Left ventricle myocardium inferior (tissue), 1 donor: ENCODE measurements at regions of chr17 and their contacts with region 1.

Region 1: DNA sequence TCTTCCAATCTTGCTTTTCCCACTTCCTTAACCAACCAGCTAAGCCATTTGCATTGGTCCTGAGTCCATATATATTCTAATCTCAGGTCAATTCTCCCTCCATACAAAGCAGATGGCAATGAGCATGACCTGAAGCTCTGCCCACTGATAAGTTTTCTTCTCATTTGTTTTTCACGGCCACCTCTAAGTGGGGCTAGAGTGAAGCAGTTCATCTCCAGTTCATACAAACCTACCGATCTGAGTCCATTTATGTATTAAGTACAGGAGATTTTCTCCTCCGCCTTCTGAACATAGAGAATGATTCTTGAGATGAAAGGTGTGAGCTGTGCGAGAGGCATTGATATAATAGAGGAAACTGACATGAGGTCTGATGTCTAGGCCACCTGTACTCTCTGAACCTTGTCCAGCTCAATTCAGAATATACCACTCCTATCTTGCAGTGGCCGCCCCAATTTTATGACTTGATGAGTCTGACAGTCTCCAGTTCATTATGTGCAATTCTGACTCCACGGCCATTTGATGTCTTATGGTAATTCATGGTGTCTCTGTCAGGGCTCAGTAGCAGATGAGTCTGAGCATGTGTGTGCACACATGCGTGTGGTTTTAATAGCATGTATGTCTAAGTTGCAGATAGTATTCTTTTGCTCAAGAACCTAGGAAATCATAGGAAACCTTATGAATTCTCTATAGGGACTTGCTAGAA is 329.8 kb downstream of the PMP22 start:
- DNase-seq: no peak
- H3K4me3 ChIP-seq: no peak overlapping the region
- H3K27ac ChIP-seq: no peak overlapping the region
- H3K4me1 ChIP-seq: no peaks in the 10 kb centered on the region
- H3K27me3 ChIP-seq: no peaks in the 10 kb centered on the region
- CTCF ChIP-seq: peak; percentile 30

Region 2: DNA sequence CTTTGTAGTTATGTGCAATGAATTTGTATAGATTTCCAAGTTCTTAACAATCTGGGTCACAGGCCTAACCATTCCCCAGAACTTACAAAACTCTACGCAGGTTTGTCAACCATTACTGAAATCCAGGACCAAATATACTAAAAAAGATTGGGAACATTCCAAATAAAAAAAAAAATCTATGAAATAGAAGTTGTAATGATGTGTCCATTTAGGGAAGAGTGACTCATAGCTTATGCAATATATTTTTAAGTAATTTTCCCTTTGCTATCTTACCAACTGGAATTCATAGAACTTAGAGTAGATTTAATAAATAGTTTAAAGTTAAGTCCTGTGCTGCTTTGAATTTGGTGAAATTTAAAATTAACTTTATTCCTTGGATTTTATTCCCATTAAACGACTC is 63.4 kb before region 1 on chr17:
- intact Hi-C with region 1: no loop called
- DNase-seq: no peak
- H3K4me3 ChIP-seq: no peak overlapping the region
- H3K27ac ChIP-seq: no peak overlapping the region
- H3K4me1 ChIP-seq: no peaks in the 10 kb centered on the region
- H3K27me3 ChIP-seq: no peaks in the 10 kb centered on the region
- CTCF ChIP-seq: no peak

Region 3: DNA sequence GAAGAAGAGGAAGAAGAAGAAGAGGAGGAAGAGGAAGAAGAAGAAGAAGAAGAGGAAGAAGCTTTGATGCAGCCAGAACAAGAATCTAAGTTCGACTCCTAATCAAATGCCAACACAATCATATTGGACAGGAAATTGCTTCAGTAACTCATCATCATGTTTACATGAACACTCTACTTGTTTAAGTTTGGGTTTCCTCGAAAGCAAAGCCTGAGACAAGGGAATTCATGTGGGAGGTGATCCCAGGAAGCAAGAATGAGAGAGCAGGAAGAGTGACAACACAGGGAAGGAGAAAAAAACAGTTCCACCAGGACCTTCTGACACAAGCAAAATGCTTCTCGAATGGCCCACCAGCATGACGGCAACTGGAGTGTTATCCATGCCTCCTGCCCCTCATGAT is 50.8 kb after region 1 on chr17:
- intact Hi-C with region 1: no loop called
- DNase-seq: no peak
- H3K4me3 ChIP-seq: no peak overlapping the region
- H3K27ac ChIP-seq: no peak overlapping the region
- H3K4me1 ChIP-seq: no peaks in the 10 kb centered on the region
- H3K27me3 ChIP-seq: peaks cover 18% of the 10 kb centered on the region
- CTCF ChIP-seq: no peak

Region 4: GRCh38 chr17:14997290-14997689 is 62.0 kb after region 1 on chr17:
- intact Hi-C with region 1: no loop called
- DNase-seq: no peak
- H3K4me3 ChIP-seq: no peak overlapping the region
- H3K27ac ChIP-seq: no peak overlapping the region
- H3K4me1 ChIP-seq: no peaks in the 10 kb centered on the region
- H3K27me3 ChIP-seq: no peaks in the 10 kb centered on the region
- CTCF ChIP-seq: no peak

Region 5: GRCh38 chr17:15038656-15039055 is 103.4 kb after region 1 on chr17:
- intact Hi-C with region 1: no loop called
- DNase-seq: no peak
- H3K4me3 ChIP-seq: no peak overlapping the region
- H3K27ac ChIP-seq: no peak overlapping the region
- H3K4me1 ChIP-seq: no peaks in the 10 kb centered on the region
- H3K27me3 ChIP-seq: no peaks in the 10 kb centered on the region
- CTCF ChIP-seq: no peak

Region 6: DNA sequence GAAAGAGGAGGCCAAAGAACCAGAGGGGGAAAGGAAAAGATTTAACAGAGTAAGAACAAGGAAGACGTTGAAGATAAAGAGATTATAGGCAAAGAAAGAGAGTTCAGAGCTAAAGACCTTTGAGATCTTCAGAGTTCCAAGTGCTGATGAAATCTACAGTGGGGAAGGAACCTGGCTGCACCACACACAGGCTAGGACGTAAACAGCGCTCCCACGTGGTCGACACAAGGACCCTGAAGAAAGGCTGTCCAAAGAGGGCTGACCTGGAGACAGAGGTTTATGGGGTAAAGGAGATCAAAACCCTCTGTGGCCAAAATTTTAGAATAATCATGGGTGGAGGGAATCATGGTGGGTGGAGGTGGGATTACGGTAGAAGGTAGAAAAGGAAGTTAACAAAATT is 208.2 kb after region 1 on chr17:
- intact Hi-C with region 1: loop called (anchors 10 kb)
- DNase-seq: no peak
- H3K4me3 ChIP-seq: no peak overlapping the region
- H3K27ac ChIP-seq: no peak overlapping the region
- H3K4me1 ChIP-seq: no peaks in the 10 kb centered on the region
- H3K27me3 ChIP-seq: no peaks in the 10 kb centered on the region
- CTCF ChIP-seq: no peak